Dendritic cell treated with granulocyte-macrophage colony-stimulating factor and Interleukin-4, amounts not matched to agents 40 ng/mL and 50 ng/mL, for 4 days (primary cell): ENCODE measurements at regions of chr20 and their contacts with region 1.

Region 1: GRCh38 chr20:37270576-37271420 is 9.2 kb upstream of the GHRH start:
- H3K4me3 Mint-ChIP-seq: peak overlapping the region; percentile 9
- H3K27ac Mint-ChIP-seq: peak overlapping the region; percentile 96
- H3K4me1 Mint-ChIP-seq: peaks cover 70% of the 10 kb centered on the region
- H3K27me3 Mint-ChIP-seq: no peaks in the 10 kb centered on the region

Region 2: DNA sequence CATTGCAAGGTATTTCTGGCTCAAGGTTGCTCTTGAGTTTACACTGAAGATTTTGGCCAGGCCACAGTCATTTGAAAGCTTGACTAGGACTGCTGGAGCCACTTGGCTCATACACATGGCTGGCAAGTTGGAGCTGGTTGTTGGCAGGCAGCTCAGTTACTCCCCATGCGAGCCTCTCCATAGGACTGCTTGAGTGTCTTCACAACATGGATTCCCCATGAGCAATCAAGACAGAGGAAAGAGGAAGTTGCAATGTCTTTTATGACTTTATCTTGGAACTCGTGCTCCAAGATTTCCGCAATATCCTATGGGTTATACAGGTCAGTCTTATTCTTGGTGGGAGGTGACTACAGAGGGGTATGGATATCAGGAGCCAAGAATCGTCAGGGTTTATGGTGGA is 17.3 kb after region 1 on chr20:
- intact Hi-C with region 1: loop called (anchors 2 kb)
- H3K4me3 Mint-ChIP-seq: no peak overlapping the region
- H3K27ac Mint-ChIP-seq: peak overlapping the region; percentile 94
- H3K4me1 Mint-ChIP-seq: peaks cover 44% of the 10 kb centered on the region
- H3K27me3 Mint-ChIP-seq: no peaks in the 10 kb centered on the region

Region 3: GRCh38 chr20:37316116-37316774 is 45.4 kb after region 1 on chr20:
- intact Hi-C with region 1: loop called (anchors 2 kb)
- H3K4me3 Mint-ChIP-seq: no peak overlapping the region
- H3K27ac Mint-ChIP-seq: peak overlapping the region; percentile 87
- H3K4me1 Mint-ChIP-seq: peaks cover 71% of the 10 kb centered on the region
- H3K27me3 Mint-ChIP-seq: no peaks in the 10 kb centered on the region

Region 4: DNA sequence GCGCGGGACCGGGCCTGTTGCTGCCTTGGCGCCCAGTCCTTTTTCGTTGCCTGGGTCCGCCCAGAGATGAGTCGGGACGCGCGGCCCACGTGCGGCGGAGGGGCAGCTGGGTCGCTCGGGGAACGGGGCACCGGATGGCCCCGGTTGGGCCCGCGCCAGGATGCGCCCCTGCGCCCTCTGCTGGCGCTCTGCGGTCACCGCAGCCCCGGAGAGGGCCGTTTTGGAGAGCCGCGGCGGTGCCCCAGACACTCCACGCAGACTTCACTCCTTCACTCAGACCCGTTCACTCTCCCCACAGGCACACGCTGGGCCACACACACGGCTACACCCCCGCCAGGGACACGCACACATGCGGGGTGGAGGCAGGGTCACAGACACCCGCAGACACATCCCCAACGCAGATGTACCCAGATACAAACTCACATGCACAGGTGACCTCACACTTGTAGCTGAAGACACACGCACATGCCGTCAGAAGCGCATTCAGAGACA is 113.9 kb after region 1 on chr20:
- intact Hi-C with region 1: loop called (anchors 2 kb)
- H3K4me3 Mint-ChIP-seq: peak overlapping the region; percentile 70
- H3K27ac Mint-ChIP-seq: peak overlapping the region; percentile 55
- H3K4me1 Mint-ChIP-seq: peaks cover 62% of the 10 kb centered on the region
- H3K27me3 Mint-ChIP-seq: no peaks in the 10 kb centered on the region

Region 5: DNA sequence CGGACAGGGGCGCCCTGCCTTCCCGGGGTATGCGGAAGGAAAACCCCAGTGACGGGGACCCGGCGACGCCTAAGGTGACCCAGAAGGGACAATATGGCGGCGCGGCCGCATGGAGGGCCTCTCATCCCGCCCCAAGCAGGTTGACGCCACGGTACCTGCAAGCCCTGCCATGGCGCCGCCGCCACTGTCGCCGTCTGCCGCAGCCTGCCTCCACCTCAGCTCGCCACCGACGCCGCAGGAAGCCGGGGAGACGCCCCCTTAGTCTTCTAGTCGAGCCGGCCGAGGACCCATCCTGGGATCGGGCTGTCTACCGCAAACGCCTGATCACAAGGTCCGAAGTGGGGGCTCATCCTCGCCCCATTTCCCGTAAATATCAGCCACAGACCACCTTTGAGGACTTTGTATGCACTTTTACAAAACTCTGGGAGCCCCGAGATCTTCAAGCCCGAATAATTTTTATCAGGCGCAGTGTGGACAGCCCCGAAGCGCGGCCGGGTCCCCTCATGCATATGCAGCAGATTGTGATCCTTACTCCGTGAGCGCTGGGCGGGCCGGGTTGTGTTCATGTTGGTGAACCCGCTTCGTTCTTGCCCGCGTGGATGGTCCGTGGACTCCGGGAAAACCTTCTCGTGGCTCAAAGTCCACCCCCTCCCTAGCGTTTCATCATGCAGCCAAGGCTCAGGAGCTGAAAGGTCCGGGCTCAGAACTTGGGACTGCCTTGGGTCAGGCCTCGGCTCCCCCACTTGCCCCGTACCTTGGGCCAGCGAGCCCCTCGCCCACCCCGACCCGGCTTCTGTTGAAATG is 257.0 kb after region 1 on chr20 and contains the start of gene BLCAP:
- intact Hi-C with region 1: loop called (anchors 1 kb)
- H3K4me3 Mint-ChIP-seq: peak within 1 kb of the TSS; percentile 93
- H3K27ac Mint-ChIP-seq: peak within 1 kb of the TSS; percentile 98
- H3K4me1 Mint-ChIP-seq: peaks cover 51% of the 10 kb centered on the region
- H3K27me3 Mint-ChIP-seq: peaks cover 8% of the 10 kb centered on the region

Region 6: GRCh38 chr20:37534401-37535157 is 263.8 kb after region 1 on chr20:
- intact Hi-C with region 1: loop called (anchors 1 kb)
- H3K4me3 Mint-ChIP-seq: no peak overlapping the region
- H3K27ac Mint-ChIP-seq: no peak overlapping the region
- H3K4me1 Mint-ChIP-seq: peaks cover 13% of the 10 kb centered on the region
- H3K27me3 Mint-ChIP-seq: peaks cover 6% of the 10 kb centered on the region